ENCODE measurements at regions of chr7 and their contacts with region 1.

Region 1: DNA sequence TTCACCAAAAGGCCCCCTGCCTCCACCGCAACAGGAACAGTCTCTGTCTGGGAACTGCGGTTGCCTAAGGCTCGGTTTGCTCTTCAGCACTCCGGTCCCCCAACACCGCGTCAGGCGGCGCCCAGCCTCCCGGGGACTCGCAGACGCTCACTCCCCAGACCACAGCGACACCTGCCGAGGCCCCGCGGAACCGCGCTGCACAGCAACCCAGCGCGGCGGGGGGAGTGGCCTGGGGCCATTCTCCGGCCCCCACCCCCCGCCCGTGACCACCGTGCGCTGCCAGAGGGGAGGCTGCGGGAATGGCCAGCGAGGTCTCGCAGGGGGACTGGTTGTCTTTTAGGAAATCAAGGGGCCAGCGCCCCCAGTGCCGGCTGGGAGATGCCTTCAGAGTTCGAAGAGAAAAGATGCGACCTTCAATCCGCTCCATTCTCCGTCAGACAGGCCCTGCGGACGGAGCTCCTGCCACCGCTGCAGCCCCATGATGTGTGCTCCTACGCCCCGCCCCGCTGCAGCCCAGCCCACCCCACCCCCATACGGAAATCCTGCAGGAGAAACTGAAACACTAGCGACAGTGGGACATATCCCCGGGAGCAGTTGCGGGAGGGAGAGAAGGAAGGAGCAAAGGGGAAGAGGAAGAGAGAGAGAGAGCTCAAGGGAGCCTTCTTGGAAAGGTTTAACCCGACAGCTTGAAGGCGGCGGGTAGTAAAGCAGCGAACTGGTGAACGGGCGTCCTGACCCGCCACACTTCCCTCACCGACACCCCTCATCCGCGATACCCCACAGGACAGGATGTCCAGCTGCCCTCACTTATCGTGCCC is 137.4 kb upstream of the CDCA7L start:
- DNase-seq: peak; percentile 86
- H3K4me3 ChIP-seq: peak overlapping the region; percentile 22 to 69 (median 66)
- H3K27ac ChIP-seq: peak overlapping the region; percentile 6
- H3K4me1 ChIP-seq: peaks cover 11% of the 10 kb centered on the region
- H3K27me3 ChIP-seq: peaks cover 10 to 19% of the 10 kb centered on the region in 2 experiments
- CTCF ChIP-seq: peak; percentile 98 to 99
- POLR2A ChIP-seq: peak; percentile 69

Region 2: DNA sequence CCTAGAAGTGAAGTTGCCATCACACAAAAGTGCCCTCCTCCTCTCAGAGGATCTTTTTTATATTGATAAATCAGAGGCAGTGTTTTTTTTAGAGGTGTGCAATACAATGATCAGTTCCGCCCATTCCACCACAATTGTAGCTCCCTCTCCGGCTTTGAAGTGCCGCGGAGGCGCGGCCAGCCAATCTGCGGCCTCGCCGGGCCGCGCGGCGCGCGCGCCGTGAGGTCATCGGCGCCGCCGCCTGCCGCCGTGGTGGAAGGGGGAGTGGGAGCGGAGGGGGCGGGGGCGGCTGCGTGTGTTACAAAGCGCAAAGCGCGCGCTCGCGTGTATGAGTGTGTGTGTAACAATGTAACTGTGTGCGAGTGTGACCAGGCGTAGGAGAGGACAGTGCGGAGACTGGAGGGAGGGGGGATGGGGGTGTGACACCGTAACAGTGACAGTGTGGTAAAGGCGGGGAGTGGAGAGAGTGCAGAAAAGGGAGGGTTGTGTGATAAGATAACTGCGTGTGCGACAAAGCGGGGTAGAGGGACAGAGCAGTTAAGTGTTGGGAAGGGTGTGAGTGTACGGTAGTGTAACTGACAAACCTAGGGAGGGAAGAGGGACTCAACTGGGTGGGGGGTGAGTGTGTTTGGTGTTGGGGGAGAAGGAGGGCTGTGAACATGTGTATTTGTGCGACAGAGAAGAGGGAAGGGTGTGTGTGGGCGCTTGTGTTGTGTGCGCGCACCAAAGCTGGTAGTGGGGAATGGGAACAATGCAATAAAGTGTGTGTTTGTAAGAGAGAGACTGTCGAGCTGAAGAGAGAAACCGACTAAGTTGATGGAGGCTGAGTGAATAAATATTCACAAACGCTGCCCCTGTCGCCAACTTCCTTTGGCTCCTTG is 1296.1 kb before region 1 on chr7 and contains the start of gene SP8:
- CTCF ChIA-PET with region 1: interaction called, 6 read pairs
- POLR2A ChIA-PET with region 1: no interaction called
- dilution Hi-C with region 1: no loop called
- intact Hi-C with region 1: loop called (anchors 2 kb)
- DNase-seq: peak; percentile 51
- H3K4me3 ChIP-seq: peak within 1 kb of the TSS; percentile 23 to 66 (median 38)
- H3K27ac ChIP-seq: no peak within 1 kb of the TSS
- H3K4me1 ChIP-seq: peaks cover 19% of the 10 kb centered on the region
- H3K27me3 ChIP-seq: peaks cover 74 to 97% of the 10 kb centered on the region in 2 experiments
- CTCF ChIP-seq: no peak
- POLR2A ChIP-seq: no peak
- total RNA-seq, gene SP8: 0.38 and 2.5 TPM in 2 replicates

Region 3: GRCh38 chr7:21261627-21262594 is 821.2 kb before region 1 on chr7:
- CTCF ChIA-PET with region 1: interaction called, 49 read pairs
- POLR2A ChIA-PET with region 1: no interaction called
- dilution Hi-C with region 1: no loop called
- intact Hi-C with region 1: loop called (anchors 2 kb)
- DNase-seq: peak; percentile 67
- H3K4me3 ChIP-seq: no peak overlapping the region
- H3K27ac ChIP-seq: no peak overlapping the region
- H3K4me1 ChIP-seq: peaks cover 2% of the 10 kb centered on the region
- H3K27me3 ChIP-seq: no peaks in the 10 kb centered on the region
- CTCF ChIP-seq: peak; percentile 67 to 68
- POLR2A ChIP-seq: no peak

Region 4: DNA sequence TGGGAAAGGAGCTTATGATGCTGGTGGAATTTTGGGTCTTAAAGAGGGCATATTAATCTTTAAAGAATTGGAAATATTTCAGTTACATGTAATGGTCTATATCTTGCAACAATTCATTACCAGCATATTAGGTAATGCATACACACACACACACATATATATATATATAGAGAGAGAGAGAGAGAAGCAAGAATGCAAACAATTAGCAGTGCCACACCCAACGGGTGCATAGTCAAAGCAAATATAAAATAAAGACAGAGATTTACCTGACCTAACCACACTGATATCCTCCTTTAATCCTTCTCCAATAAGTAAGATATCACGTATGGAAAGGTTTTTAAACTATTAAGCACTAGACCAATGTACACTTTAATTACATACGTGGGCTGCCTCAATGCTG is 559.3 kb before region 1 on chr7:
- CTCF ChIA-PET with region 1: interaction called, 4 read pairs
- POLR2A ChIA-PET with region 1: no interaction called
- dilution Hi-C with region 1: no loop called
- intact Hi-C with region 1: loop called (anchors 5 kb)
- DNase-seq: no peak
- H3K4me3 ChIP-seq: no peak overlapping the region
- H3K27ac ChIP-seq: no peak overlapping the region
- H3K4me1 ChIP-seq: no peaks in the 10 kb centered on the region
- H3K27me3 ChIP-seq: peaks cover 0 to 2% of the 10 kb centered on the region in 2 experiments
- CTCF ChIP-seq: no peak
- POLR2A ChIP-seq: no peak

Region 5: GRCh38 chr7:21945454-21946227 is 137.5 kb before region 1 on chr7 and contains the start of gene CDCA7L:
- CTCF ChIA-PET with region 1: interaction called, 3 read pairs
- POLR2A ChIA-PET with region 1: no interaction called
- dilution Hi-C with region 1: no loop called
- intact Hi-C with region 1: loop called (anchors 5 kb)
- DNase-seq: peak; percentile 82
- H3K4me3 ChIP-seq: peak within 1 kb of the TSS; percentile 59 to 91 (median 80)
- H3K27ac ChIP-seq: peak within 1 kb of the TSS; percentile 91
- H3K4me1 ChIP-seq: peaks cover 52% of the 10 kb centered on the region
- H3K27me3 ChIP-seq: no peaks in the 10 kb centered on the region
- CTCF ChIP-seq: no peak
- POLR2A ChIP-seq: peak; percentile 92
- total RNA-seq, gene CDCA7L: 91.6 and 93.7 TPM in 2 replicates